PC-9 (cell line): ENCODE measurements at regions of chr3 and their contacts with region 1.

Region 1: GRCh38 chr3:19250959-19251610 is 102.8 kb downstream of the KCNH8 start:
- DNase-seq: no peak
- H3K4me3 ChIP-seq: no peak overlapping the region
- H3K27ac ChIP-seq: no peak overlapping the region
- H3K4me1 ChIP-seq: no peaks in the 10 kb centered on the region
- H3K27me3 ChIP-seq: no peaks in the 10 kb centered on the region
- CTCF ChIP-seq: no peak

Region 2: DNA sequence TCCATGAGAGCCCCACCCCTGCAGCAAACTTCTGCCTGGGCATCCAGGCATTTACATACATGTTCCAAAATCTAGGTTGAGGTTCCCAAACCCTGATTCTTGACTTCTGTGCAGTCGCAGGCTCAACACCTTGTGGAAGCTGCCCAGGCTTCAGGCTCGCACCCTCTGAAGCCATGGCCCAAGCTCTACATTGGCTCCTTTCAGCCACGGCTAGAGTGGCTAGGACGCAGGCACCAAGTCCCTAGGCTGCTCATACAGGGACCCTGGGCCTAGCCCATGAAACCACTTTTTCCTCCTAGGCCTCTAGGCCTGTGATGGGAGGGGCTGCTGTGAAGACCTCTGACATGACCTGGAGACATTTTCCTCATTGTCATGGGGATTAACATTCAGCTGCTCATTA is 653.2 kb before region 1 on chr3:
- CTCF ChIA-PET with region 1: no interaction called
- POLR2A ChIA-PET with region 1: no interaction called
- intact Hi-C with region 1: no loop called
- DNase-seq: no peak
- H3K4me3 ChIP-seq: no peak overlapping the region
- H3K27ac ChIP-seq: no peak overlapping the region
- H3K4me1 ChIP-seq: no peaks in the 10 kb centered on the region
- H3K27me3 ChIP-seq: no peaks in the 10 kb centered on the region
- CTCF ChIP-seq: no peak

Region 3: GRCh38 chr3:18679238-18679637 is 571.8 kb before region 1 on chr3:
- CTCF ChIA-PET with region 1: no interaction called
- POLR2A ChIA-PET with region 1: no interaction called
- intact Hi-C with region 1: no loop called
- DNase-seq: no peak
- H3K4me3 ChIP-seq: no peak overlapping the region
- H3K27ac ChIP-seq: no peak overlapping the region
- H3K4me1 ChIP-seq: peaks cover 14% of the 10 kb centered on the region; the same call in 1 of the 2 replicates
- H3K27me3 ChIP-seq: no peaks in the 10 kb centered on the region
- CTCF ChIP-seq: no peak

Region 4: DNA sequence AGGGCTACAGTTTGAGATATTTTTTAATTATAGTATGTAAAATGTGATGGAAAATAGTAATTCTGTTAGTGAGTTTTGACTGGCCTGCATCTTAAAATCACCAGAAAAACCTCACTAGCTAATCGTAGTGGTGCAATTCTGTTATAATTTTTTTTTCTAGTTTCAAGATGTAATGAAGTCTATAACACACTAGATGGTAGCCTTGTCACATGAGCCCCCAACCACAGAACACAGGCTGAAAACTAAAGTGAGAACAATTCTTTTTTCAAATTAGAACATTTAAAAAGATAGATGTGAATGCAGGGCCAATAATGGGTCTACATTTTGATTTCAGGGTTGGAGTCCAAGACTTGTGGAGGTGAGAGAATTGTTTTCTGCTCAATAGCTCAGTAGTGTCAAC is 186.1 kb before region 1 on chr3:
- CTCF ChIA-PET with region 1: no interaction called
- POLR2A ChIA-PET with region 1: no interaction called
- intact Hi-C with region 1: loop called (anchors 10 kb)
- DNase-seq: no peak
- H3K4me3 ChIP-seq: no peak overlapping the region
- H3K27ac ChIP-seq: no peak overlapping the region
- H3K4me1 ChIP-seq: peaks cover 10% of the 10 kb centered on the region
- H3K27me3 ChIP-seq: no peaks in the 10 kb centered on the region
- CTCF ChIP-seq: peak; percentile 59